Endothelial cell of umbilical vein (primary cell): ENCODE measurements at regions of chr14 and their contacts with region 1.

Region 1: DNA sequence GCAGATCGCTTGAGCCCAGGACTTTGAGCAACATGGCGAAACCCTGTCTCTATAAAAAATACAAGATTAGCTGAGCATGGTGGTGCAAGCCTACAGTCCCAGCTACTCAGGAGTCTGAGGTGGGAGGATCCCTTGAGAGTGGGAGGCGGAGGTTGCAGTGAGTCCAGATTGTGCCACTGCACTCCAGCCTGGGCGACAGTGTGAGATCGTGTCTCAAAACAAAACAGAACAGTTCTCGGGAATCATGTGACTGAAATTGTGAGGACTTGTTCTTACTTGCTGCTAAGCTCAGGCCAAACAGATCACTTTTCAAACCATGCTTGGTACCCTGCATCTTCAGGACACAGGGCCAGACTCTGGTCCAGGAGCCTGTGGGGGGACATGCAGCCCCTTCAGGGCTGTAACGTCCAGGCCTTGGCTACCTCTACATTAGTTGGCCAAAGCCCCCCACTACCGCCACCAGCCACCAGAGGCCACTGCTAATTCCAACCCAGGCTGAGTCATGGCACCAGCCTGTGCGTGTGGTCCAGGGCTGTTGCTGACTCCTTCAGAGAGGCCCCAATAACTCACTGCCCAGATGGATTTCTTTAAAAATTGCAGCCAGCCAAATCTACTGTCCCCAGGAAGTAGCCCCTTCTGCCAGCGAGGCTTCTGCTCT is 33.4 kb upstream of the SYNDIG1L start:
- DNase-seq: peak; percentile 49
- H3K4me3 ChIP-seq: no peak overlapping the region
- H3K27ac ChIP-seq: no peak overlapping the region
- H3K4me1 ChIP-seq: peaks cover 8% of the 10 kb centered on the region
- H3K27me3 ChIP-seq: no peaks in the 10 kb centered on the region
- CTCF ChIP-seq: peak; percentile 73 to 81
- POLR2A ChIP-seq: no peak

Region 2: GRCh38 chr14:74739293-74740030 is 280.0 kb after region 1 on chr14:
- CTCF ChIA-PET with region 1: no interaction called
- POLR2A ChIA-PET with region 1: no interaction called
- dilution Hi-C with region 1: no loop called
- intact Hi-C with region 1: loop called (anchors 5 kb)
- DNase-seq: no peak
- H3K4me3 ChIP-seq: no peak overlapping the region
- H3K27ac ChIP-seq: no peak overlapping the region
- H3K4me1 ChIP-seq: no peaks in the 10 kb centered on the region
- H3K27me3 ChIP-seq: no peaks in the 10 kb centered on the region
- CTCF ChIP-seq: no peak
- POLR2A ChIP-seq: no peak